Heart right ventricle (tissue), 16 donors: ENCODE measurements at regions of chr20 and their contacts with region 1.

Region 1: DNA sequence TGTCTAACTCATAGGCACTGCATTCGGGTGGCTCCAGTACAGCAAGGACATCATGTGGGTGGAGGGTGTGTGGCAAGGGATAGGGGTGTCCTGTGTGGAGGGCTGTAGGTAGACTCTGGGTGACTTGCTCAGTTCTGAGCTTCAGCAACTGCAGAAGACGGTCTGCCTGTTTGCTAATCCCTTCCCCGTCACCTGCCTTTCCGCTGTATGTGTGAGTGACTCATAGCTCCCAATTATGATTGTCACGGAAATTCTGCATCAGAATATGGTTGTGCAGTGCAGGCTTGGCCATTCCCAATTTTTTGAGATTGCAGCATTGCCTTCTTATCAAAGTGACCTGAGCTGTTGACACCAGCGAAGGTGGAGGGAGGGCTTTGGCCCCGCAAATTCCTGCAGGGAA is 174.3 kb downstream of the CDH4 start:
- DNase-seq: no peak
- ATAC-seq: no peak
- H3K4me3 ChIP-seq: no peak overlapping the region
- H3K27ac ChIP-seq: no peak overlapping the region
- H3K4me1 ChIP-seq: no peaks in the 10 kb centered on the region
- H3K27me3 ChIP-seq: peaks cover 0 to 18% (median 7%) of the 10 kb centered on the region in 7 donors
- CTCF ChIP-seq: no peak

Region 2: GRCh38 chr20:60691966-60692960 is 734.1 kb before region 1 on chr20:
- intact Hi-C with region 1: no loop called
- DNase-seq: no peak
- ATAC-seq: no peak
- H3K4me3 ChIP-seq: no peak overlapping the region
- H3K27ac ChIP-seq: no peak overlapping the region
- H3K4me1 ChIP-seq: no peaks in the 10 kb centered on the region
- H3K27me3 ChIP-seq: peaks cover 0 to 25% (median 14%) of the 10 kb centered on the region in 7 donors
- CTCF ChIP-seq: no peak

Region 3: DNA sequence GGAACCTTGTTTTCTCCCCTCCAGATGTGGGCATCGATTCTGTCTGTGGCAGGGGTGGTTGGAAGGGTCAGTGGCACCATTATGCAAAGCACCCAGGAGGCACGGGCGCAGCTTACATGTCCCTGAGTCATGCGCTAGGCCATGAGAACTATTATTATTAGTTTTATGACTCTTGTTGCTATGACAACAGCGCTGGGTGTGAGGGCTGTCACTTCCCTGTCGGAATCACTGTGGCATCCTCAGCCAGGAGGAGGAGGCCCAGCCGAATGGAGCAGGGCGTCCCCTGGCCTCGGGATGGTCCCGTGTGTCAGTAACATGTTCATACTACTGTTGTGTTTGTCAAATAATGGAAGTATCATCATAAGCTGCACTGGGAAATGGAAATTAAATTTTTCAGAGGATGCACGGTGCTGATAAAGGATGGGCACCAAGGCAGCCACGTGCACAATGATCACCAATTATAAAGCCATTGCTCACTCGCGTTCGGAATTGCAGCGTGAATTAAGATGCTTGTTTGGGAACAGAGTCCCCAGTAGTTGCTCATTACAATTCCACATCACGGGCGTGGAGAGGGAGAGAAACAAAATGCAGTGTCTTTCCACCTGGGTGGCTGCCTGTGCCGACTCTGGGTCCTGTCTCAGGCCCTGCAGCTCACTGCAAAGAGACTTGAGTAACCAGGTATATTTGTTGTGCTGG is 73.6 kb after region 1 on chr20:
- intact Hi-C with region 1: loop called in 1 of 10 experiments (anchors 10 kb)
- DNase-seq: no peak
- ATAC-seq: no peak
- H3K4me3 ChIP-seq: no peak overlapping the region
- H3K27ac ChIP-seq: no peak overlapping the region
- H3K4me1 ChIP-seq: no peaks in the 10 kb centered on the region
- H3K27me3 ChIP-seq: peaks cover 0 to 27% (median 17%) of the 10 kb centered on the region in 7 donors
- CTCF ChIP-seq: no peak

Region 4: DNA sequence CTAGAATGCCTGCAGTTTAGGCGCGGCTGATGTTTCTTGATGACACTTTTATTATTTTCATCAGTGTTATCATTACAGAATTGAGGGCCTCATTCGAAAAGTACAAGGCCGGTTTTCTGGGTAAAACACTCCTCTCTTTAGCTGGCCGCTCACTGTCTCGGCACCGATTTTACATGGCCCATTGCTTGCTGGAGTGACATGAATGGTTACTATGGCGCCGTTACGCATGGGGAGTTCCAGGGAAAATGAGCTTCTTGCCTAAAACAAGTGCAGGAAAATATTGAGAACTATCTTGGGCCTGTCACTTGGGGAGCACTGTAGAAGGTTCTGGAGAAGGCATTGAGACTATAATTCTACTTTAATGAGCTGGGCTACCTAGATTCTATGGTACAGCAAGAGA is 143.5 kb after region 1 on chr20:
- intact Hi-C with region 1: no loop called
- DNase-seq: no peak
- ATAC-seq: no peak
- H3K4me3 ChIP-seq: no peak overlapping the region
- H3K27ac ChIP-seq: no peak overlapping the region
- H3K4me1 ChIP-seq: no peaks in the 10 kb centered on the region
- H3K27me3 ChIP-seq: peaks cover 0 to 19% (median 0%) of the 10 kb centered on the region in 7 donors
- CTCF ChIP-seq: no peak

Region 5: DNA sequence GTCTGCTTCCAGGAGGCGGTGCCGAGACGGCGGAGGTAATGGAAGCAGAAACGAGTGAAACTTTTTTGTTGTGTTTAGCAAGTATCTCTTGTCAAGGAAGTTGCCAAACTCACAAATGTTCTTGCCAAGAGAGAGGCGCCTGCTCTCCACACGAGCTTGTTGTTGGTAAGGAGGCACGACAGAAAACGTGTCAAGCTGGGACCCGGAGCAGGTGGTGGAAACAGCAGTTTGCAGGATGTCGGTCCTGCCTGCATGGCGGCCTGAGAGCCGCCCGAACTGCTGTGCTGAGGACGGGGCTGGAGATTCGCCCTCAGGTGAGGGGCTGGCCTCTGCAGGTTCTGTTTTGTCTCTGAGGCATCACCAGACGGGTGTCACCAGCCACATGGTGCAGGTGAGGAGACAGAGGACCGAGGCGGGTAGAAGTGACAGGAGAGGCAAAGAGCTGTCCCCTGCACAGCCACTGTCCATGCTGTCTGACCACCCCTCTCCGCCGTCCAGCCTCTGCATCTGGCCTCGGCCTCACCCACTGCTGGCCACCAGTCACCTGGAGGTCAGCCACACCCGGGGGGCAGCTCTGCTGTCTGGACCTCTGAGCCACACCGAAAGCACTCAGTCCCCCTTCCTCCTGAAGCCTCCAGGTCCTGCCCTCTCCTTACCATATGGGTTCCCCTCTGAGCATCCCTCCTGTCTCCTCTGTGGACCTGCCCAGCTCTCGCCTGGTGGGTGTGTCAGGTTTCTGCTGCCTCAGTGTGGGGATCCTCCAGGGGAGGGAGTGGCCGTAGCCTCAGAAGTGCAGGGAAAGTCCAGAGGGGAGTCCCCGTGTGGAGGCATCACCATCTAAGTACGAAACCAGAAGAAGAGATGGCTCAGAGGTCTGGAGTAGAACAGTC is 377.8 kb after region 1 on chr20:
- intact Hi-C with region 1: loop called in 1 of 10 experiments (anchors 5 kb)
- DNase-seq: no peak
- ATAC-seq: no peak
- H3K4me3 ChIP-seq: peak overlapping the region in 1 of 10 donors; percentile 5
- H3K27ac ChIP-seq: no peak overlapping the region
- H3K4me1 ChIP-seq: peaks cover 0 to 4% (median 0%) of the 10 kb centered on the region in 9 donors
- H3K27me3 ChIP-seq: peaks cover 0 to 97% (median 75%) of the 10 kb centered on the region in 7 donors
- CTCF ChIP-seq: no peak